A549 (cell line): ENCODE measurements at regions of chr4 and their contacts with region 1.

Region 1: GRCh38 chr4:121900132-121900983 is 30.1 kb upstream of the BBS7 start:
- DNase-seq: peak; percentile 21 to 51
- ATAC-seq: peak; percentile 86 to 92
- H3K4me3 ChIP-seq: no peak overlapping the region
- H3K27ac ChIP-seq: no peak overlapping the region
- H3K4me1 ChIP-seq: no peaks in the 10 kb centered on the region
- CTCF ChIP-seq: peak; percentile 77
- EP300 ChIP-seq: no peak
- POLR2A ChIP-seq: no peak
- RAD21 ChIP-seq: peak; percentile 76 to 83

Region 2: GRCh38 chr4:121964958-121965357 is 64.6 kb after region 1 on chr4:
- CTCF ChIA-PET with region 1: no interaction called
- POLR2A ChIA-PET with region 1: no interaction called
- DNase-seq: no peak
- ATAC-seq: no peak
- H3K4me3 ChIP-seq: no peak overlapping the region
- H3K27ac ChIP-seq: no peak overlapping the region
- H3K4me1 ChIP-seq: no peaks in the 10 kb centered on the region
- CTCF ChIP-seq: no peak
- EP300 ChIP-seq: no peak
- POLR2A ChIP-seq: no peak
- RAD21 ChIP-seq: no peak

Region 3: DNA sequence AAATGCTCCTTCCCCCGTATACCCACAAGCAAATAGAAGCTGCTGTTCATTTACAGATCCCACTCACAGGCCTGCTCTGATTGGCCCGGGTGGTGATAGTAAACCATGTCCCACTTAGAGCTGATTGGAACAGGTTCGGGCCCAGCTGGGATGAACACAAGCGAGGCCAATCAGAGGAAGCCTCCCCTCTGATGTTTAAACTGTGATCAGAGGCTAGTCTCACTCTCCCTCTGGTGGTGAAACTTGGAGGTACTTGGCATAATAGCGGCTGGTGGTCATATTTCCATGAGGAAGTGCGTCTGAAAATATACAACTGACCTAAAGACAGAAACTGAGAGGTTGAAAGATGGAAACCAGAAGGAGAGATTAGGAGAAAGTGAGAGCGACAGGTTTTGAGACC is 103.0 kb after region 1 on chr4:
- CTCF ChIA-PET with region 1: interaction called, 10 read pairs
- POLR2A ChIA-PET with region 1: no interaction called
- DNase-seq: peak; percentile 28 to 65
- ATAC-seq: peak; percentile 68 to 97
- H3K4me3 ChIP-seq: no peak overlapping the region
- H3K27ac ChIP-seq: no peak overlapping the region
- H3K4me1 ChIP-seq: no peaks in the 10 kb centered on the region
- CTCF ChIP-seq: peak; percentile 22; the same call in 1 of the 3 replicates
- EP300 ChIP-seq: no peak
- POLR2A ChIP-seq: no peak
- RAD21 ChIP-seq: peak in 1 of 2 experiments; percentile 45; a peak in 2 of 5 replicates

Region 4: GRCh38 chr4:122577808-122578781 is 677.7 kb after region 1 on chr4:
- CTCF ChIA-PET with region 1: interaction called, 47 read pairs
- POLR2A ChIA-PET with region 1: no interaction called
- DNase-seq: peak; percentile 44 to 50
- ATAC-seq: peak; percentile 90 to 91; a peak in 5 of 6 replicates
- H3K4me3 ChIP-seq: no peak overlapping the region
- H3K27ac ChIP-seq: no peak overlapping the region
- H3K4me1 ChIP-seq: no peaks in the 10 kb centered on the region
- CTCF ChIP-seq: peak; percentile 51
- EP300 ChIP-seq: no peak
- POLR2A ChIP-seq: no peak
- RAD21 ChIP-seq: peak; percentile 25 to 30; a peak in 3 of 5 replicates